IMR-90 (cell line): ENCODE measurements at regions of chr4 and their contacts with region 1.

Region 1: GRCh38 chr4:154807042-154807630 is 26.1 kb downstream of the RBM46 start:
- DNase-seq: peak; percentile 54
- ATAC-seq: peak; percentile 81
- H3K4me3 ChIP-seq: no peak overlapping the region; the same call in 1 of the 2 replicates
- H3K27ac ChIP-seq: no peak overlapping the region; the same call in 1 of the 2 replicates
- H3K4me1 ChIP-seq: no peaks in the 10 kb centered on the region
- H3K27me3 ChIP-seq: no peaks in the 10 kb centered on the region
- CTCF ChIP-seq: peak; percentile 98
- POLR2A ChIP-seq: no peak
- RAD21 ChIP-seq: peak; percentile 72

Region 2: DNA sequence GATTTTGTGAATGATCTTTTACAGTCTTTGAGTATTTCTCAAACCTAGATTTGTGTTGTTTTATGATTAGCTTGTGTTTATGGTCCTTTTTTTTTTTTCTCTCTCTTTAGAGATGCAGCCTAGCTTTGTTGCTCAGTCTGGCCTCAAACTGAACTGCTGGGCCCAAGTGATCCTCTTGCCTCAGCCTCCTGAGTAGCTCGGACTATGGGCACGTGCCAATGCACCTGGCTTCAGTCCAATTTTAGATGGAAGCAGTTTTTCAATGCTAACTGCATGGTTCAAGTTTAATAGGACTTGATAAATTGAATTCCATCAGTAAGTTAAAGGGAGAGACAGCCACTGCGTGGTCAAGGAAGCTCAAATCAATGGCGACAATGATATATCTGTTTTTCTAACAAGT is 190.8 kb before region 1 on chr4:
- CTCF ChIA-PET with region 1: no interaction called
- POLR2A ChIA-PET with region 1: no interaction called
- dilution Hi-C with region 1: no loop called
- in situ Hi-C with region 1: no loop called
- intact Hi-C with region 1: no loop called
- DNase-seq: no peak
- ATAC-seq: no peak
- H3K4me3 ChIP-seq: no peak overlapping the region
- H3K27ac ChIP-seq: no peak overlapping the region
- H3K4me1 ChIP-seq: no peaks in the 10 kb centered on the region
- H3K27me3 ChIP-seq: no peaks in the 10 kb centered on the region; the same call in 1 of the 2 replicates
- CTCF ChIP-seq: no peak
- POLR2A ChIP-seq: no peak
- RAD21 ChIP-seq: no peak

Region 3: DNA sequence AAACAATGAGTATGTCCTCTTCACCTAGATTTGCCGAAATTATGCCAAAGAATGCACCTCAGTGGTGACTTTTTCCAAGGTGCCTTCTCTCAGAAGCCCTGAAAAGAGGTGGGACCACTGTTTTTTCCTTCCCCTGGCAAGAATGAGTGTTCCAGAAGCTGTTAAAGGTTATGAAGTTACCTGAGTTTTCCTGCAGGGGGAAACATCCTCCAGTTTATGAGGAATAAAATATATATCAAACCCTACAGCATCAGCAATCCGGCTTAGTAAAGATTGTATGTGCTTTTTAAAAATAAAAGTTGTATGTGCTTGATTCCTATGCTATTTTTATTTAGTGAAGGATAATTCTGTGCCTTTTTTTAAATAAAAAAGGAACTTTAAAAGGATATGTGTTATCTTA is 47.2 kb after region 1 on chr4:
- CTCF ChIA-PET with region 1: no interaction called
- POLR2A ChIA-PET with region 1: no interaction called
- dilution Hi-C with region 1: no loop called
- in situ Hi-C with region 1: no loop called
- intact Hi-C with region 1: loop called (anchors 5 kb)
- DNase-seq: peak; percentile 4
- ATAC-seq: no peak
- H3K4me3 ChIP-seq: no peak overlapping the region
- H3K27ac ChIP-seq: no peak overlapping the region
- H3K4me1 ChIP-seq: no peaks in the 10 kb centered on the region
- H3K27me3 ChIP-seq: no peaks in the 10 kb centered on the region
- CTCF ChIP-seq: 0 out of 2 replicates have a peak, but pooled peaks have one; percentile 15
- POLR2A ChIP-seq: no peak
- RAD21 ChIP-seq: no peak

Region 4: GRCh38 chr4:154911097-154911496 is 104.0 kb after region 1 on chr4:
- CTCF ChIA-PET with region 1: no interaction called
- POLR2A ChIA-PET with region 1: no interaction called
- dilution Hi-C with region 1: no loop called
- in situ Hi-C with region 1: no loop called
- intact Hi-C with region 1: loop called (anchors 1 kb)
- DNase-seq: peak; percentile 2
- ATAC-seq: peak; percentile 51; the same call in 1 of the 2 replicates
- H3K4me3 ChIP-seq: no peak overlapping the region
- H3K27ac ChIP-seq: no peak overlapping the region
- H3K4me1 ChIP-seq: no peaks in the 10 kb centered on the region
- H3K27me3 ChIP-seq: no peaks in the 10 kb centered on the region
- CTCF ChIP-seq: peak; percentile 27; the same call in 1 of the 2 replicates
- POLR2A ChIP-seq: no peak
- RAD21 ChIP-seq: no peak

Region 5: GRCh38 chr4:154928640-154929257 is 121.6 kb after region 1 on chr4:
- CTCF ChIA-PET with region 1: interaction called, 9 read pairs
- POLR2A ChIA-PET with region 1: no interaction called
- dilution Hi-C with region 1: no loop called
- in situ Hi-C with region 1: no loop called
- intact Hi-C with region 1: loop called (anchors 1 kb)
- DNase-seq: peak; percentile 55
- ATAC-seq: peak; percentile 70
- H3K4me3 ChIP-seq: no peak overlapping the region
- H3K27ac ChIP-seq: no peak overlapping the region
- H3K4me1 ChIP-seq: no peaks in the 10 kb centered on the region
- H3K27me3 ChIP-seq: no peaks in the 10 kb centered on the region
- CTCF ChIP-seq: peak; percentile 68
- POLR2A ChIP-seq: no peak
- RAD21 ChIP-seq: peak; percentile 67

Region 6: GRCh38 chr4:155353923-155354540 is 546.9 kb after region 1 on chr4:
- CTCF ChIA-PET with region 1: no interaction called
- POLR2A ChIA-PET with region 1: no interaction called
- dilution Hi-C with region 1: no loop called
- in situ Hi-C with region 1: no loop called
- intact Hi-C with region 1: loop called (anchors 1 kb)
- DNase-seq: peak; percentile 46
- ATAC-seq: peak; percentile 95
- H3K4me3 ChIP-seq: no peak overlapping the region
- H3K27ac ChIP-seq: no peak overlapping the region
- H3K4me1 ChIP-seq: no peaks in the 10 kb centered on the region
- H3K27me3 ChIP-seq: no peaks in the 10 kb centered on the region
- CTCF ChIP-seq: peak; percentile 68
- POLR2A ChIP-seq: no peak
- RAD21 ChIP-seq: peak; percentile 65

Region 7: DNA sequence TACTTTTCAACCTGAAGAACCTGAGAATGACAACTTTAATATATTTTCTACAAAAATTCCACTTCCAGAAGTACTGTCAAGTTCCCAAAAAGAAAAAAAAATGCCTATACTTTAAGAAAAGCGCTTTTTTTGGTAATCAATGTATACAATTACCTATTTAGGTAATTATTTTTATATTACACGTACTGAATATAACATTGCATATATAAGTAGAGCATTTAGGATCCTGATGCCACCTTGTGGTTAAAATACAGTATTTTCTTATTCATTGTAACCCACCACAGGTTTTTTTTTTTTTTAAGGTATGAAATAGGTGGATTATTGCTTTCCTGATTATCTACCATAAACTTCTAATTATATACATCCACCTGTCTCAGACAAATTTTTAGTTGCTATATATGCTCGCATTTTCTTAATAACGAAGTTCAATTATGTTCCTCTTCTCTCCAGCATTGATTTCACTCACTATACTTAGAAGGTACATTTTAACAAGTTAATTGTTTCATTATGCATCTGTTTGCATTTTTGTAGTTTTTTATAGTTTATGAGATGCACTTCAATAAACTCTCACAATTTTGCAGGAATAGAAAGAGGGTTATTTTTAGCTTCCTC is 564.4 kb after region 1 on chr4:
- CTCF ChIA-PET with region 1: no interaction called
- POLR2A ChIA-PET with region 1: no interaction called
- dilution Hi-C with region 1: no loop called
- in situ Hi-C with region 1: loop called (anchors 10 kb)
- intact Hi-C with region 1: loop called (anchors 1 kb)
- DNase-seq: peak; percentile 21
- ATAC-seq: peak; percentile 45; the same call in 1 of the 2 replicates
- H3K4me3 ChIP-seq: no peak overlapping the region
- H3K27ac ChIP-seq: no peak overlapping the region
- H3K4me1 ChIP-seq: no peaks in the 10 kb centered on the region
- H3K27me3 ChIP-seq: no peaks in the 10 kb centered on the region
- CTCF ChIP-seq: peak; percentile 46
- POLR2A ChIP-seq: no peak
- RAD21 ChIP-seq: peak; percentile 42

Region 8: GRCh38 chr4:155787113-155787710 is 980.1 kb after region 1 on chr4:
- CTCF ChIA-PET with region 1: interaction called, 3 read pairs
- POLR2A ChIA-PET with region 1: no interaction called
- dilution Hi-C with region 1: no loop called
- in situ Hi-C with region 1: loop called (anchors 25 kb)
- intact Hi-C with region 1: loop called (anchors 10 kb)
- DNase-seq: peak; percentile 70
- ATAC-seq: peak; percentile 96
- H3K4me3 ChIP-seq: no peak overlapping the region
- H3K27ac ChIP-seq: no peak overlapping the region
- H3K4me1 ChIP-seq: peaks cover 2% of the 10 kb centered on the region; the same call in 1 of the 2 replicates
- H3K27me3 ChIP-seq: no peaks in the 10 kb centered on the region
- CTCF ChIP-seq: peak; percentile 93
- POLR2A ChIP-seq: 0 out of 2 replicates have a peak, but pooled peaks have one; percentile 46
- RAD21 ChIP-seq: peak; percentile 93